GM10248 (cell line): ENCODE measurements at regions of chr5 and their contacts with region 1.

Region 1: DNA sequence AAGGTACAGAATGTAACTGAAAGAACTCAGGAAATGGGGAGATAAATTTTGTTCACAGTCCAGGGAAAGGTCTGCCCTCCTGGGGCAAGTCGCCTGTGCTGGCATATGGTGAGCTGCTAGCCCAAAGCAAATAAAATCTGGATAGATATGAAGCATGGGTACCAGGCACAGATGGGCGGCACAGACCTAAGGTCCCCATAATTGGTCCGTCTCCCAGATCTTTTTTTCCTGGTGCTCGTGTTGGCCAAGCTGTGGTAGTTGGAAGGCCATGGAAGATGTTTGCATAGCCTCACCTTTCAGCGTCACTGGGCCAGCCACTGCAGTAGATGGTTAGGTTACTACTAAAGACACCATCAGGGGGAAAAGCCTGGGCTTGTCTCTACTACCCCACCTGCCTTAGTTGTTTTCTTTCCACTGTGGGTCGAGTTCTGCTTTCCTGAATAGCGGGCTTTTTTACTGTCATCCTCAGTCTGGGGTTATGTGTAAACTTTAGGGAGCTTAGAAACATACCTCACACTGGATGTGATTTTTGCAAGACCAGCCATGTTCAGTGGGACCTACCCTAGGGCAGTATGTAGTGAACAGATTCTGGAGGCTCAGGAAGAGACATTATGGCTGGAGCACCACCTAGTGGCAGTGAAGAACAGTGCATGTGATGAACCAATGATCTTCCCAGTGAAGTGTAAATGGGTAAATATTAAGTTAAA is 24.2 kb upstream of the GLRX start:
- DNase-seq: peak; percentile 75
- CTCF ChIP-seq: peak; percentile 88

Region 2: DNA sequence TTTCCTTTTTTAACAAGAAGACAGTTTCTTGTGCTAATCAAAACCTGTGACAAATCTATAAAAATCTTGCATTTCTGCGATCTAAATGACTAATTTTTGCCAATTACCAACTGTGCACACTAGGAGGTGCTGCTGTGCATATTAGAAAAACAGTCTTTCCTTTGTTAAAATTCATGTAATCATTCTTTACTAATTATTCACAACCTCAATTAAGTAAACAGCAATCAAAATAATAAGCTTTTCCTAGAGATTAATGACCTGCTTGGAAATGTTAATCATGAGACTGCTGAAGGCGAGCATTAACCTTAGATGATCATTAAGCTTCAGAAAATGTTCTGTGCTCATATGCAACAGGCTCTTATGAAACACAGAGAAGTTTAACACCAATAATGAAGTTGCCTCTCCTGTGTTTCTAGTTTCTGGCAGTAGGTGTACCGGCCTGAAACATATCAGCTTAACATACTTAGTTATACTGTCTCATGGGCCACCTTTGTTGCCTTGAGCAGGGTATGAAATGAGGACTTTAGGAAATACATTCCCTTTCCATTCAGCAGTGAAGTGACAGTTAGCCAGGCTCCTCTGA is 182.4 kb before region 1 on chr5:
- CTCF ChIA-PET with region 1: interaction called, 20 read pairs
- POLR2A ChIA-PET with region 1: no interaction called
- DNase-seq: no peak
- CTCF ChIP-seq: peak; percentile 72

Region 3: DNA sequence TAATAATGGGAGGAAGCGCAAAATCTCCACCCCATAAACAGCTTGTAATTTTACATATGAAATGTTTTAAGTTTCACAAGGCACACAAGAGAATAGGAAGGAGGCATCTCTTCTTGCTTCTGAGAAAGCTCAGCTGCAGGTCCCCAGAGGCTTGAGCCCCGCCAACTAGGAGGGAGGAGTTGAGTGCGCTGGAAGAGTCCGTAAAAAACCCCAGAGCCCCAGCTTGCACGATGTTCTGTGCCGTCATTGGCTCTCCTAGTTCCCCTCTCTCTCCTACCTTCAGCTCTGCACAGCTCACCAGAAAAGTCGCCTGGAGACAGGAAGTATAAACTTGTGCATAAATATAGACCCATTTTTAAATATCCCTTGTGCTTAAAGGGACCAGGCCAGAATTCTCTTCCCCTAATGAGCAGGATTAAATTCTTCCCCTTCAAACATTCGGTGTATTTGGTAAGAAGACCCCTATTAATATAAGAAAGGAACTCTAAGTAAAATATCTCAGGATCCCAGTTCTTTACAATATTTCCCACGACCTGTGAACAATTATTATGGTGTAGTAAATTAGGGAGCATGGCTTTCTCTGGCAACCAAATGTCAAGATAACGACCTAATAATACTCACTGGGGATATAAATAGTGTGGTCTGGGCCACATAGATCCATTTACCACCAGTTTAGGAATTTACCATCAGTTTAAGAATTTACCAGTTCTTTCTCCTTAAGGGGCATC is 37.9 kb before region 1 on chr5:
- CTCF ChIA-PET with region 1: interaction called, 16 read pairs
- POLR2A ChIA-PET with region 1: no interaction called
- DNase-seq: peak; percentile 88
- CTCF ChIP-seq: no peak

Region 4: DNA sequence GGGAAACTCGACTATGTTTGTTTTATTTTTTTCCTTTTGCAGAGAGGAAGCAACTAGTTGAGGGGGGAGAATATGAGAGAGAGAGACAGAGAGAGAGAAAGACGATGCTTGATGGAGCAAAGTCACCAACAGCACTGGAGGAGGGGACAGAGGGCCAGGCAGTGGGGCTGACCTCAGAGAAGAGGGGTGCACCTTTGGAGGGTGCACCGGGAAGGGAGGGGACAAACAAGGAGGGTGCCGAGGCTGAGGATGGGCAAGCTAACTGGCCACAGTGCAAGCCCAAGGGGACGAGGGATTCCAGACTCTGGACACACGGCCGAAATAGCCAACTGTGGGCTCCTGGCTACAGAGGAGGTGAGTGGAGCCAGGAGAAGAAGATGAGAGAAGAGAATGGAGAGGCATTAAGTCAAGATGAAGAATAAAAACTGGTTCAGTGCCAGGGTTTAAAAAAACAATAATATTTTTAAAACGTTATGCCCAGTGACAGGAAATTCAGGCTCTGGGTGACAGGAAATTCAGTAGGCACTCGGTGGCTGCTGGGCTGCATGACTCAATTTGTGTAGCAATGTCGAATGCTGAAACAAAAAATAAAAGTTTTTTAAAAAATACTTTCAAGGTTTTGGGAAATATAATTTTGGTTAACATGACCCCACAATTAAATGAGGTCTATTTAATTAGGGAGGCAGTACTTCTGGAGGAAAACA is 10.9 kb before region 1 on chr5:
- CTCF ChIA-PET with region 1: interaction called, 10 read pairs
- POLR2A ChIA-PET with region 1: no interaction called
- DNase-seq: no peak
- CTCF ChIP-seq: no peak

Region 5: GRCh38 chr5:95956021-95956899 is 109.6 kb after region 1 on chr5:
- CTCF ChIA-PET with region 1: no interaction called
- POLR2A ChIA-PET with region 1: no interaction called
- DNase-seq: no peak
- CTCF ChIP-seq: no peak